AG04450 (cell line): ENCODE measurements at regions of chr21 and their contacts with region 1.

Region 1: GRCh38 chr21:31866077-31866511 is 6.7 kb upstream of the HUNK start:
- DNase-seq: peak; percentile 23
- H3K4me3 ChIP-seq: no peak overlapping the region
- H3K27ac ChIP-seq: no peak overlapping the region
- H3K27me3 ChIP-seq: peaks cover 9% of the 10 kb centered on the region
- CTCF ChIP-seq: peak; percentile 83

Region 2: DNA sequence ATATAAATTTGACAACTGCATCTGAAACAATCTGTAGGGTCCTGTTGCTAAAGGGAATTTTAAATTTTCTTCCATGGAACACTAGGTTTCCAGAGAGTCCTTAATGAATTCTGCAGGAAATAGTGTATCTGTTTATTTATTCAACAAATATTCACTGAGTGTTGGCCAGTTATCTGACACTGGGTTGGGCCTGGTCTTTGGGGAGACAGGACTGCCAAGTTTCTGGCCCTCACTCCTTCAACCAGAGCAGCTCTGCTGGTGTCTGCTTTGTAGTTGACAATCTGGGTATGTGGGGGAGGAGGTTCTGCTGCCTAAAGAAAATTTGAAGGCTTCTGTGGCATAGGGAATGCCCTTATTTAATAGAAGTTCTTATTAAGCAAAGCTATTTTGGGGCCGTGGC is 19.4 kb before region 1 on chr21:
- CTCF ChIA-PET with region 1: no interaction called
- POLR2A ChIA-PET with region 1: no interaction called
- DNase-seq: no peak
- H3K4me3 ChIP-seq: no peak overlapping the region
- H3K27ac ChIP-seq: no peak overlapping the region
- H3K27me3 ChIP-seq: no peaks in the 10 kb centered on the region
- CTCF ChIP-seq: no peak

Region 3: GRCh38 chr21:32278518-32279376 is 412.7 kb after region 1 on chr21 and contains the start of gene MIS18A:
- CTCF ChIA-PET with region 1: interaction called, 10 read pairs
- POLR2A ChIA-PET with region 1: no interaction called
- DNase-seq: peak; percentile 91
- H3K4me3 ChIP-seq: peak within 1 kb of the TSS; percentile 94
- H3K27ac ChIP-seq: peak within 1 kb of the TSS; percentile 77
- H3K27me3 ChIP-seq: no peaks in the 10 kb centered on the region
- CTCF ChIP-seq: no peak
- polyA plus RNA-seq, gene MIS18A: 4.7 and 6.3 TPM in 2 replicates